ENCODE measurements at regions of chr2 and their contacts with region 1.

Region 1: GRCh38 chr2:237691908-237692600 is 64.7 kb downstream of the LRRFIP1 start:
- DNase-seq: peak; percentile 97
- H3K4me3 ChIP-seq: peak overlapping the region; percentile 70 to 98
- H3K27ac ChIP-seq: peak overlapping the region; percentile 91 to 97
- H3K4me1 ChIP-seq: peaks cover 20% of the 10 kb centered on the region
- H3K27me3 ChIP-seq: no peaks in the 10 kb centered on the region
- CTCF ChIP-seq: peak in 2 of 4 experiments; percentile 23 to 28
- POLR2A ChIP-seq: peak; percentile 86

Region 2: GRCh38 chr2:237739101-237739500 is 47.0 kb after region 1 on chr2:
- intact Hi-C with region 1: loop called (anchors 5 kb)
- DNase-seq: no peak
- H3K4me3 ChIP-seq: no peak overlapping the region
- H3K27ac ChIP-seq: peak overlapping the region; percentile 13 to 38
- H3K4me1 ChIP-seq: peaks cover 32% of the 10 kb centered on the region
- H3K27me3 ChIP-seq: no peaks in the 10 kb centered on the region
- CTCF ChIP-seq: no peak
- POLR2A ChIP-seq: no peak